Ovary (tissue), 10 donors: ENCODE measurements at regions of chr1 and their contacts with region 1.

Region 1: DNA sequence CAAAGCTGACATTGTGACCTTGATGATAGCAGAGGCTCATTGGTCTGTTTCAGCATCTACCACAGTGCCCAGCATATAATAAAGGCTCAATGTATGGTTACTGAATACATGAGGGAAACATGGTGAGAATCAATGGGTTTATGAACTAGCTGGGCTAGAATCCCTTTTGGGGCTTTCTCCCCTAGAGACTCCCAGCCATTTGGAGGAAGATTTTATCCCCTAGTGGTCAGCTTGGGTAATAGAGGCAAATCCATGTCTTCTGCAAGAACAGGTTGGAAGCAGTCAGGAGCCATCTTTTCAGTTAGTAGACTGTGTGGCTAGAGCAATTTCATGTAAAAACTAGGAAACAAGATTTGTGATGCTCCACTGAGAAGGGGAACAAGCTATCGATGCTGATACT is 15.8 kb upstream of the REG4 start:
- DNase-seq: no peak
- H3K4me3 ChIP-seq: no peak overlapping the region
- H3K27ac ChIP-seq: no peak overlapping the region
- H3K4me1 ChIP-seq: no peaks in the 10 kb centered on the region
- H3K27me3 ChIP-seq: no peaks in the 10 kb centered on the region
- CTCF ChIP-seq: no peak
- EP300 ChIP-seq: no peak
- POLR2A ChIP-seq: no peak

Region 2: GRCh38 chr1:119675349-119676345 is 151.4 kb before region 1 on chr1:
- intact Hi-C with region 1: no loop called
- DNase-seq: peak; percentile 68 to 92 (median 81)
- H3K4me3 ChIP-seq: peak overlapping the region; percentile 30
- H3K27ac ChIP-seq: no peak overlapping the region
- H3K4me1 ChIP-seq: peaks cover 11% of the 10 kb centered on the region
- H3K27me3 ChIP-seq: no peaks in the 10 kb centered on the region
- CTCF ChIP-seq: peak; percentile 72 to 80 (median 74)
- EP300 ChIP-seq: no peak
- POLR2A ChIP-seq: no peak

Region 3: DNA sequence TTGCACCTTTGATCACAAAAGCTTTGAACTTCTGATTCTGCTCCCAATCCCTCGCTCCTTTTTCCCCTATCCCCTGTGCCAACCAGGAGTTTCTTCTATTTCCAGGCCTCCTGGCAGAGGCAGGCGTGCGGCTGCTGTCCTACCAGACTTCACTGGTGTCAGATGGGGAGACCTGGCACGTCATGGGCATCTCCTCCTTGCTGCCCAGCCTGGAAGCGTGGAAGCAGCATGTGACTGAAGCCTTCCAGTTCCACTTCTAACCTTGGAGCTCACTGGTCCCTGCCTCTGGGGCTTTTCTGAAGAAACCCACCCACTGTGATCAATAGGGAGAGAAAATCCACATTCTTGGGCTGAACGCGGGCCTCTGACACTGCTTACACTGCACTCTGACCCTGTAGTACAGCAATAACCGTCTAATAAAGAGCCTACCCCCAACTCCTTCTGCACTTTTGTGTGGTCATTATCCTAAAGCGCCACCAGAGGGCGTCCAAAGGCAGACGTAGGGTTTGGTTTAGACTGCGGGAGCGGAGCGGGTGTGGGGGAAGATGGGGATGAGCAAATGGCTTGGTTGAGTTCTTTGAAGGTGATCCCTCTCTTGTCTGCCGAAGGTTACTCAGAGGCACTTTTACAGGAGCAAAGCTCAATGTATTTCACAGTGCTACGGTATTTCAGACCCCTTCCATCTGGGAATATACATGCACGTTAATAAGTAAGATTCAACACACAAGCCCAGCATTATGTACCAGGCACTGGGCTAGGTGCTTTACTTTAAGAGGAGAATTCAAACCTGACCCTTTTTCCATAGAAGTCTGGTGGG is 83.0 kb before region 1 on chr1:
- intact Hi-C with region 1: no loop called
- DNase-seq: peak; percentile 65 to 77 (median 72)
- H3K4me3 ChIP-seq: no peak overlapping the region
- H3K27ac ChIP-seq: no peak overlapping the region
- H3K4me1 ChIP-seq: peaks cover 9% of the 10 kb centered on the region
- H3K27me3 ChIP-seq: no peaks in the 10 kb centered on the region
- CTCF ChIP-seq: peak; percentile 64 to 79 (median 68)
- EP300 ChIP-seq: no peak
- POLR2A ChIP-seq: no peak

Region 4: DNA sequence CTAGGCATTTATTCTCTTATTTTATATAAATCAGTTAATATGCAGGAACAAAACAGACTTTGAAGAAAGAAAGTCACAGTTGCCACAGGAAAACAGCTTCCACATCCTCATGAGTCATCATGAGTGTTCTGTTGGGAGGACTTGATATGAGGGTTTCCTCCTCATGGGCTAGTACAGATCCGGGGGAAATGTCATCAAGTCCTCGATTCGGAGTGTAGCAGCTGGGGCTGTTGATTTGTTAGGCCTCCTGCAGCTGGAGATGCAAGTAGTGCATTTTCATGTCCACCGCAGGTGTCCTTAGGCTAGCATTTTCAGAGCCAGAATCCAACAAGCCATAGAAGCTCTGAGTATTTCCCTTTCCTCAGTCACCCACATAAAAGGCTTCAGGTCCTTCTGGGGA is 32.6 kb after region 1 on chr1:
- intact Hi-C with region 1: loop called in 1 of 4 experiments (anchors 1 kb)
- DNase-seq: no peak
- H3K4me3 ChIP-seq: no peak overlapping the region
- H3K27ac ChIP-seq: no peak overlapping the region
- H3K4me1 ChIP-seq: no peaks in the 10 kb centered on the region
- H3K27me3 ChIP-seq: no peaks in the 10 kb centered on the region
- CTCF ChIP-seq: no peak
- EP300 ChIP-seq: no peak
- POLR2A ChIP-seq: no peak